Heart right ventricle (tissue), 16 donors: ENCODE measurements at regions of chr3 and their contacts with region 1.

Region 1: GRCh38 chr3:101036213-101036618 is 43.0 kb upstream of the ABI3BP start:
- DNase-seq: no peak
- ATAC-seq: peak in 2 of 8 donors; percentile 44 to 64
- H3K4me3 ChIP-seq: no peak overlapping the region
- H3K27ac ChIP-seq: no peak overlapping the region
- H3K4me1 ChIP-seq: peaks cover 0 to 17% (median 6%) of the 10 kb centered on the region in 9 donors
- H3K27me3 ChIP-seq: no peaks in the 10 kb centered on the region
- CTCF ChIP-seq: no peak

Region 2: DNA sequence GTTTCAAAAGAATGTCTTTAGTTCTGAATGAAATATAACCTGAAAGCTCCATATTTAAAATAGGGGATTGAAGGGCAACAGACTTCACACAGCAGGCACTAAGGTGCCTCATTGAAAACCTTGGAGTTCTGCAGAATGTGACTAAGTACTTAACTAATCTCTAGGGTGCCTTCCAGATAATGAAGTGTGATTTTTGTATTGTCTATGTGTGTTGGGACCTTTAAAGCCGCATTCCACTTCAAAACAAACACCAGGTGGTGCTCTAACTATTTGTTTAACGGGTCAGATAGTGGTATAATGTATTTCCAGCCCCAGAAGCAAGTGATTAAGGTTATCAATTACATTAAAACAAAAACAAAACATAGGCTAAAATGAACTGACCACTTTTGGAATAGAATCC is 298.9 kb before region 1 on chr3:
- intact Hi-C with region 1: no loop called
- DNase-seq: no peak
- ATAC-seq: peak in 3 of 8 donors; percentile 29 to 55 (median 37)
- H3K4me3 ChIP-seq: no peak overlapping the region
- H3K27ac ChIP-seq: no peak overlapping the region
- H3K4me1 ChIP-seq: peaks cover 0 to 33% (median 10%) of the 10 kb centered on the region in 9 donors
- H3K27me3 ChIP-seq: no peaks in the 10 kb centered on the region
- CTCF ChIP-seq: peak in 7 of 9 donors; percentile 9 to 55 (median 44)

Region 3: GRCh38 chr3:101009386-101009785 is 26.8 kb before region 1 on chr3:
- intact Hi-C with region 1: loop called in 1 of 10 experiments (anchors 2 kb)
- DNase-seq: no peak
- ATAC-seq: no peak
- H3K4me3 ChIP-seq: no peak overlapping the region
- H3K27ac ChIP-seq: peak overlapping the region in 1 of 10 donors; percentile 68
- H3K4me1 ChIP-seq: no peaks in the 10 kb centered on the region
- H3K27me3 ChIP-seq: no peaks in the 10 kb centered on the region
- CTCF ChIP-seq: no peak

Region 4: GRCh38 chr3:101050046-101050445 is 13.8 kb after region 1 on chr3:
- intact Hi-C with region 1: no loop called
- DNase-seq: no peak
- ATAC-seq: peak in 1 of 8 donors; percentile 12
- H3K4me3 ChIP-seq: no peak overlapping the region
- H3K27ac ChIP-seq: no peak overlapping the region
- H3K4me1 ChIP-seq: peaks cover 0 to 4% (median 0%) of the 10 kb centered on the region in 9 donors
- H3K27me3 ChIP-seq: no peaks in the 10 kb centered on the region
- CTCF ChIP-seq: no peak

Region 5: DNA sequence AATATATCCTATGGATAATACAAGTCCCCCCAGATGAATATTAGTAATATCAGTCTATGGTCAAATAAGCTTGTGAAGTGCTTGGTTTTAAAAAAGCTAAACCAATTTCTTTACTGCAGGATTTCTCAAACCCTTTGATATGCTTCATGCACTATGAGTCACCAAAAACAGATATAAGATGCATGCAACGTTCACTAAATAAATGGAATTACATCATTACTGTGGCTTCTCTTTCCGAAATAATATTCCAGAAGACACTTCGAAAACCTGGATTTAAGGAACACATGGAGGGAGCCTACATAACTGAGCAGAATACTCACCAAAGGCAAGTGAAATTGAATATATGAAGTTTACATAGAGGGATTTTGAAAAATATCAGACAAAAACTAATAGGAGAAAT is 83.3 kb after region 1 on chr3:
- intact Hi-C with region 1: loop called in 1 of 10 experiments (anchors 5 kb)
- DNase-seq: no peak
- ATAC-seq: no peak
- H3K4me3 ChIP-seq: no peak overlapping the region
- H3K27ac ChIP-seq: no peak overlapping the region
- H3K4me1 ChIP-seq: peaks cover 0 to 11% (median 4%) of the 10 kb centered on the region in 9 donors
- H3K27me3 ChIP-seq: no peaks in the 10 kb centered on the region
- CTCF ChIP-seq: no peak

Region 6: DNA sequence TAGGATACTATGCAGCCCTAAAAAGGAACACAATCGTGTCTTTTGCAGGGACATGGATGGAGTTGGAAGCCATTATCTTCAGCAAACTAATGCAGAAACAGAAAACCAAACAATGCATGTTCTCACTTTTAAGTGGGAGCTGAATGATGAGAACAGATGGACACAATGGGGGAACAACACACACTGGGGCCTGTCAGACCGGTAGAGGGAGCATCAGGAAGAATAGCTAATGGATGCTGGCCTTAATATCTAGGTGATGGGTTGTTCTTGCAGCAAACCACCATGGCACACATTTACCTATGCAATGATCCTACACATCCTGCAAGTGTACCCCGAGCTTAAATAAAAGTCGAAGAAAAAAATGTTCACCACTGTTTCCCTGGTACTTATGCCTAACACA is 459.3 kb after region 1 on chr3:
- intact Hi-C with region 1: no loop called
- DNase-seq: no peak
- ATAC-seq: no peak
- H3K4me3 ChIP-seq: no peak overlapping the region
- H3K27ac ChIP-seq: no peak overlapping the region
- H3K4me1 ChIP-seq: no peaks in the 10 kb centered on the region
- H3K27me3 ChIP-seq: no peaks in the 10 kb centered on the region
- CTCF ChIP-seq: no peak

Region 7: GRCh38 chr3:101976473-101976872 is 940.3 kb after region 1 on chr3:
- intact Hi-C with region 1: no loop called
- DNase-seq: no peak
- ATAC-seq: peak in 3 of 8 donors; percentile 25 to 67 (median 46)
- H3K4me3 ChIP-seq: no peak overlapping the region
- H3K27ac ChIP-seq: no peak overlapping the region
- H3K4me1 ChIP-seq: peaks cover 0 to 3% (median 0%) of the 10 kb centered on the region in 9 donors
- H3K27me3 ChIP-seq: no peaks in the 10 kb centered on the region
- CTCF ChIP-seq: no peak